Heart right ventricle (tissue), 16 donors: ENCODE measurements at regions of chr3 and their contacts with region 1.

Region 1: DNA sequence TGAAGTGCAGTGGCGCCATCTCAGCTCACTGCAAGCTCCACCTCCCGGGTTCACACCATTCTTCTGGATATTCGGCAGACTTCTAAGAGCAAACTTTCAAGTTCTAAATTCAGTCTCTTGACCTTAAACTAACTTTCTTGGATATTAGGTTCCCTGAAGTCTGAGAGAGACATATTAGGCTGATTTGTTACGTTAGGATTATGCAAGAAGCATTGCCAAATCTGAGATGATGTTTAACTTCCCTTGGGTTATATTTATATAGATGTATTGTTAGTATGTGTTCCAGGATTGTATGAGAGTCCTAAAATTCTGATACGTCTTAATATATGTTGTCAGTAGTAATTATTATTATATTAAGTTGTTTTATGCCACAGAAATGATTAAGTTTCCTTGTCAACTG is 80.1 kb downstream of the SLC6A1 start:
- DNase-seq: no peak
- ATAC-seq: no peak
- H3K4me3 ChIP-seq: no peak overlapping the region
- H3K27ac ChIP-seq: no peak overlapping the region
- H3K4me1 ChIP-seq: peaks cover 0 to 12% (median 0%) of the 10 kb centered on the region in 9 donors
- H3K27me3 ChIP-seq: peaks cover 0 to 23% (median 11%) of the 10 kb centered on the region in 7 donors
- CTCF ChIP-seq: no peak

Region 2: DNA sequence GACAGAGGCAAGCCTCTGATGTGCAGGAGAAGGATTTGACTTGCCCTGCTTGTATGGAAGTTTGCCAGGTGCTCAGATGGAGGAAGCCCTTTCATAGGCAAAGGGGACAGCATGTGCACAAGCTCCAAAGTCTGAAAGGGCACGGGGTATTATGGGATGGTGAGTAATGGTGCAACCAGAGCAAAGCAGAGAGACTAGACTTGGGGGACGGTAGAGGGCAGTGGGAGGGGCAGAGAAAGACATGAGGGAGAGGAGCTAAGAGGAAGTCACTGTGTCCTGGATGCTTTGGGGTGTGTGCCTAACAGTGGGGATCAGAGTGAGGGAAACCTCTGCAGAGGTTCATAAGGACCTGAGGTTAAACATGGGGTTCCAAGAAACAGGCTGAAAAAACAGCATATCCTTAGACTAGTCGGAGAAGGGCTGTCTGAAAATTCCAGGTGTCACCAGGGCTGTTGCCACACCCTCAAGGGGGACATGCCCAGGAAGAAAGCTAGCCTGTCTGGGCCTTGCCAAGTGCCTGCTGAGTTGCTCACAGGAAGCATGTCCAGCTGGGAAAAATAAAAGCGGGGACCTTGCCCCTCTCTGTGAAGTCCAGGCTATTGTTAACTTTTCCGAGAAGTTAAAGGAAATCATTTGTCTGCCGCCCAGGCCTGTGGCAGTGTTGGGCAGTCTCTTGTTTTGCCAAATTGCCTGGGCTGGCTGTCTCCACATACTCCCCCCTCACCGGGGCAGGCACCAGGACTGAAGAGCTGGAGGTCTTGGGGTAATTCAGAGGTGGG is 128.8 kb after region 1 on chr3:
- intact Hi-C with region 1: loop called in 2 of 10 experiments (anchors 1 to 10 kb)
- DNase-seq: peak in 1 of 2 donors; percentile 14
- ATAC-seq: peak; percentile 50 to 75 (median 69)
- H3K4me3 ChIP-seq: no peak overlapping the region
- H3K27ac ChIP-seq: peak overlapping the region in 5 of 10 donors; percentile 2 to 74 (median 56)
- H3K4me1 ChIP-seq: peaks cover 0 to 41% (median 12%) of the 10 kb centered on the region in 9 donors
- H3K27me3 ChIP-seq: peaks cover 0 to 6% (median 0%) of the 10 kb centered on the region in 7 donors
- CTCF ChIP-seq: no peak

Region 3: GRCh38 chr3:11392014-11392859 is 319.6 kb after region 1 on chr3:
- intact Hi-C with region 1: no loop called
- DNase-seq: no peak
- ATAC-seq: no peak
- H3K4me3 ChIP-seq: no peak overlapping the region
- H3K27ac ChIP-seq: peak overlapping the region in 3 of 10 donors; percentile 0 to 50 (median 27)
- H3K4me1 ChIP-seq: peaks cover 12 to 33% (median 28%) of the 10 kb centered on the region in 9 donors
- H3K27me3 ChIP-seq: no peaks in the 10 kb centered on the region
- CTCF ChIP-seq: no peak